OCI-LY7 (cell line): ENCODE measurements at regions of chr15 and their contacts with region 1.

Region 1: GRCh38 chr15:56365075-56365711 is at the start of gene TEX9:
- DNase-seq: peak; percentile 93
- H3K4me3 ChIP-seq: peak within 1 kb of the TSS; percentile 88
- H3K27ac ChIP-seq: peak within 1 kb of the TSS; percentile 93
- H3K4me1 ChIP-seq: peaks cover 18% of the 10 kb centered on the region
- CTCF ChIP-seq: no peak
- total RNA-seq, gene TEX9: 16.9 and 20.0 TPM in 2 replicates

Region 2: DNA sequence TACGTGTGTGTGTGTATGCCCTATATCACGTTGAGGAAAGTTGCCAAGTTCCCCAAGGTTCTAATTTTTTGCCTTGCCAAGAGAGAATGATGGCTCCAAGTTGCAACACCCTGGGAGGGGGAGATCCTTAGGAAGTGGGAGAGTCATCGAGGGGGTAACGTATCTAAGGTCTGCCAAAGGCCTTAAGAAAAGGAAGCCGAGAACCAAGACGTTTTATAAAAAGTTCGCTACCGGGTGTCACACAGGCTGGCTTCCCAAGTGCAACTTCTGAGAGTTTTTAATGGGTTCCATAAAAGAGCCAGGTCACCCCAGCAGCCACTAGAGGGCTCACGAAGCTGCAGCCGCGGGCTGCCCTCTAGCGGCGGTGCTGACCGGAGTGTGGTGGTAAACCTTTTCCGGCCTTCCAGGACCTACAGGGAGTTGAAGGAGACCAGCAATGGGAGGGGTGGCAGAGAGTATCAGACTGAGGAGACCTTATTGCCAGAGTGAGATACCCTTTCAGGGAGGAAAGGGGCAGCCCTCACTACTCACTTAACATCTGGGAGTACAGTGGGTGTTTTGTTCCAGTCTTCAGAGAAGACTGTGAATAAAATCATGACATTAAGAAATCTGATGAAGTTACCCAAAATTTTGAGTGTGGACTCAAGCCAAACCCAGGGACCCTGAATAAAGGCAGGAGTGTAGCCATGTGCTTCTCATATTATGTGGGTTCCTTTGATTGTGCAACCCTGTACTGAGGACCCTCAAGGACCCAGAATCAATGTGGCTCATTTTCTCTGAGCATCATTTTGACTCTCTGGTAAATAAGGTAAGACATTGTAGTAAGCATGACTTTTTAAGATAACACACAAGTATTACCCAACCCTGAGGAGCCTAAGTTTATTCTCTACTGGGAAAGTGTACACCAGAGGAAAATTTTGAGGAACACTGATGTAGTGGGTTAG is 119.0 kb before region 1 on chr15:
- CTCF ChIA-PET with region 1: no interaction called
- POLR2A ChIA-PET with region 1: interaction called, 10 read pairs
- intact Hi-C with region 1: loop called (anchors 1 kb)
- DNase-seq: peak; percentile 96
- H3K4me3 ChIP-seq: peak overlapping the region; percentile 88
- H3K27ac ChIP-seq: peak overlapping the region; percentile 76
- H3K4me1 ChIP-seq: peaks cover 26% of the 10 kb centered on the region
- CTCF ChIP-seq: peak; percentile 100

Region 3: DNA sequence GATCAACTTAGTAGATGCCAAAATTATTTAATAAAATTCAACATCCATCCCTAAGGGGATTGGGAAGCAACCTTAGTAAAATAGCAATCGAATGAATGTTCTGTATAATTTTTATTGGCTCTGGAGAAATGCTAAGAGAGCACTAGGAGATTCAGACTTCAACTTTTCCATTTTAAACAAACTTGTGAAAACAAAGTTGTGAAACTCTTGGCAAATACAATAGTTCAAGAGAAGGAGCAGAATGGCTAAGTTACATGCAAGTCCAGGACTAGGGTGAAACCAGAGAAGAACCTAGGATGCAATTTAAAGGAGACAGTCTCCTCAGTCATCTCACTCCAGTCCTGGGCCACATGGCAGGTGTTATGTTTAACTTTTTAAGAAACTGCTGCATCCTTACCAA is 384.8 kb after region 1 on chr15:
- CTCF ChIA-PET with region 1: no interaction called
- POLR2A ChIA-PET with region 1: no interaction called
- intact Hi-C with region 1: no loop called
- DNase-seq: no peak
- H3K4me3 ChIP-seq: no peak overlapping the region
- H3K27ac ChIP-seq: no peak overlapping the region
- H3K4me1 ChIP-seq: no peaks in the 10 kb centered on the region
- CTCF ChIP-seq: no peak